ENCODE measurements at regions of chr3 and their contacts with region 1.

Region 1: GRCh38 chr3:44477312-44478030 is at the start of gene ZNF445:
- DNase-seq: peak; percentile 79
- H3K4me3 Mint-ChIP-seq: peak within 1 kb of the TSS; percentile 88
- H3K27ac Mint-ChIP-seq: peak within 1 kb of the TSS; percentile 87
- H3K4me1 Mint-ChIP-seq: peaks cover 27% of the 10 kb centered on the region
- H3K27me3 Mint-ChIP-seq: no peaks in the 10 kb centered on the region
- total RNA-seq, gene ZNF445: 19.0 TPM

Region 2: GRCh38 chr3:44065311-44066094 is 412.0 kb before region 1 on chr3:
- CTCF ChIA-PET with region 1: no interaction called
- intact Hi-C with region 1: no loop called
- DNase-seq: no peak
- H3K4me3 Mint-ChIP-seq: no peak overlapping the region
- H3K27ac Mint-ChIP-seq: no peak overlapping the region
- H3K4me1 Mint-ChIP-seq: peaks cover 8% of the 10 kb centered on the region
- H3K27me3 Mint-ChIP-seq: peaks cover 13% of the 10 kb centered on the region

Region 3: DNA sequence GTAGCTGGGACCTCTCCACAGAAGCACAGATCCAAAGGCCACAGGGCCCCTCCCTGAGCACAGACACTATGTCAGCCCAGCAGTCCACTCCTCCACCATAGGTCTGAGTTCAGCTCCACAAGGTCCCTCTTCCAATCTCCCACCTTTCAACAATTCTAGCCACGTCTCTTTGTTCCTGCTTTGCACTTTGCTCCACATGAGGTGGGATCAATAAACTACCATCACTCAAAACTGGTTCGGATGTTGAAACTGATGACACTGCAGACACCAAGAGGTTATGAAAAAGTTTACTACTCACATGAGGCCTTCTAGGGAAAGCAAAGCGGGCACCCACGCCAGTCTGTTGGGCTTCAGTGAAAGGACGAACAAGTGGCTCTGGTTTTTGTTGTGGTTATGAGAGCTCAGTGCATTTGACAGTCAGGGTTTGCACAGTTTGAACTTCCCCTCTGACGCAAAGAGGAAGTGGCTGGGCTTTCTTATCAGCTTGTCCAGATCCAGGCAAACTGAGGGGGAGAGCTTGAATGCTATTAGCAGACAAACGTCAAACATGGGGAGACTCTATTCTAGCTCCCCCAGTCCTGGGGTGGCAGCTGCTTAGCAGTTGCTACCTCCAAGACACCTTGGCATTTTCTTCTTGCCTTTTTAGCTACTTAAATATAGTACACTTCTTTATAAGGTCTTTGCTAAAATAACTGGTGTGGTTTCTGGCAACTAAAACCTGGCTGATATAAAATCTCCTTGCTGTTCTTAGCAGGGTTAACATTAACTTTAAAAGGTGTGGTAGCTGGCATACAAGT is 37.8 kb before region 1 on chr3:
- CTCF ChIA-PET with region 1: no interaction called
- intact Hi-C with region 1: loop called (anchors 1 kb)
- DNase-seq: peak; percentile 88
- H3K4me3 Mint-ChIP-seq: peak overlapping the region; percentile 57
- H3K27ac Mint-ChIP-seq: peak overlapping the region; percentile 94
- H3K4me1 Mint-ChIP-seq: peaks cover 42% of the 10 kb centered on the region
- H3K27me3 Mint-ChIP-seq: no peaks in the 10 kb centered on the region

Region 4: GRCh38 chr3:44510000-44510368 is 32.5 kb after region 1 on chr3:
- CTCF ChIA-PET with region 1: interaction called, 3 read pairs
- intact Hi-C with region 1: loop called (anchors 1 kb)
- DNase-seq: peak; percentile 22
- H3K4me3 Mint-ChIP-seq: peak overlapping the region; percentile 92
- H3K27ac Mint-ChIP-seq: peak overlapping the region; percentile 93
- H3K4me1 Mint-ChIP-seq: peaks cover 28% of the 10 kb centered on the region
- H3K27me3 Mint-ChIP-seq: no peaks in the 10 kb centered on the region

Region 5: DNA sequence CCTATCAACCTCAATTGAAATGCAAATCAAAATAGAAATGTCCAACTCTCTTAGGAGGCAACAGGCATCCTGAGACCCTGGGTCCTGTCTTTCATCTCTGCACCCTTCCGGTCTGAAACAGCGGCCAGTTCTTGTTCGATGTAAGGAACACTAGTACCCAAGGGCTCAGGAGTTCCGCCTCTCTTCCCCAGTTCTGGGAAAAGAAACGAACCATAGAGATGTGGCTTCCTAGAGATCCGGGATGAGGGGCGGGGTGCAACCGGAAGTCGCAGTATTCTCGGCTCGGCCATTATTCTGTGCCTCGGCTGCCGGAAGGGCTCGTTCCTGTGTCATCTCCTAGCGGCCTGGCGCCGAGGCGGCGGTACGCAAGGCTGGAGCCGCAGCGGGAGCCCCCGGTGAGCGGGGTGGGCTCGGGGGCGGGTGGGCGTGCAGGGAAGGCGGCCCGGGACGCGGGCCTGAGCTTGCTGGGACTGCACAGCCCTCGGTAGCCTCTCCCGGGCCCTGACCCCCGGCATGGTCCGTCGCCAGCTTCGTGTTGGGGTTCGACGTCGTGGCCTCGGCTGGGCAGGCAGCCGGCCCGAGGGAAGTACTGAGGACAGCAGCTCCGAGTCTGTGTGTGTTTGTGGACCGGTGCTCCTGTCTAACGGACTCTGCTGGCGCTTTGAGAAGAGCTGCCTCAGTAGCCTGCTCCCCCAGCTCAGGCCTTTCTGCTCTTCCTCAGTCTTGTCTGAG is 147.4 kb after region 1 on chr3 and contains the start of gene ZNF197:
- CTCF ChIA-PET with region 1: no interaction called
- intact Hi-C with region 1: loop called (anchors 10 kb)
- DNase-seq: peak; percentile 77
- H3K4me3 Mint-ChIP-seq: peak within 1 kb of the TSS; percentile 88
- H3K27ac Mint-ChIP-seq: peak within 1 kb of the TSS; percentile 79
- H3K4me1 Mint-ChIP-seq: peaks cover 28% of the 10 kb centered on the region
- H3K27me3 Mint-ChIP-seq: no peaks in the 10 kb centered on the region
- total RNA-seq, gene ZNF197: 7.7 to 8.4 TPM

Region 6: GRCh38 chr3:44729384-44729910 is 252.0 kb after region 1 on chr3 and contains the start of gene ZNF501:
- CTCF ChIA-PET with region 1: no interaction called
- intact Hi-C with region 1: loop called (anchors 2 kb)
- DNase-seq: peak; percentile 94
- H3K4me3 Mint-ChIP-seq: peak within 1 kb of the TSS; percentile 90
- H3K27ac Mint-ChIP-seq: peak within 1 kb of the TSS; percentile 73
- H3K4me1 Mint-ChIP-seq: peaks cover 9% of the 10 kb centered on the region
- H3K27me3 Mint-ChIP-seq: no peaks in the 10 kb centered on the region
- total RNA-seq, gene ZNF501: 1.6 to 2.7 TPM